Activated T-helper 2 cell treated with anti-CD3 and anti-CD28 coated beads, Interferon-gamma antibody, Interleukin-2, Interleukin-4, amounts not matched to agents 10 μg/mL and 5 μg/mL and 100 μg/mL, durations not matched to agents 14 hours and 24 hours and 36 hours (primary cell): ENCODE measurements at regions of chr17 and their contacts with region 1.

Region 1: DNA sequence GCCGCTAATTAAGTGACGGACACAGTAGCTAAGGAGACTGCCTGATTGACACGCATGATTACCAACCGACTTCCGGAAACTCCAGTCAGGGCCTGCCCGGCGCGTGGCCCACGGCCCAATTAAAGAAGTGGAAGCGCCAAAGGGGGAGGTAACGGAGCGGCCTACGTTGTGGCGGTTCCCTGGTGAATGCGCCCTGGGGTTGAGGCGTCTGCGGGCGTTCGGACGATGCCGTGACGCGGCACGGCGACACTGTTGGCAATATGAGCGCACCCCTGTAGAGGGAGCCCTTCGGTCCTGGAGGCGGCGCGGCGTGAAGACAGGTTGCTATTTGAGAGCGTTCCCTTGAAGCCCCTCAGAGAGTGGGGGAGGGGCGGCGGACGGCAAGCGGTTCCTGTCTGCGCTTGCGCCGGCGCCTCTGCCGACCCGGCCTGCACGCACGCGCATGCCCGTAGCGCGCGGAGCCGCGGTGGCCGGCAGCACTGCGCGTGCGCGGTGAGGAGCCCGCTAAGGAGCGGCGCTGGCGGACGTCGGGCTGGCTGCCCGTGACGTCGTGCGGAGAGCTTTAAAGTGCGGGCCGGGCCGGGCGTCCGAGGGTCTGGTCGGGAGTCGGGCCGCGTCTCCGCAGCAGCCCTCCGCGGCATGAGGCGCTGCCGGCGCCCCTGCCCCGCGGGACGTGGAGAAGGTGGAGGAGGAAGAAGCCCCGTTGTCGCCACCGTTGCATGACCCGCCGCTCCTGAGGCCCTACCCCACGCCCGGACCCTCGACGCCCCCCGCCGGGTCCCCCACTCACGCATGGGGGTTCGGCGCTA is at the start of gene ALKBH5:
- DNase-seq: peak; percentile 96
- H3K4me3 Mint-ChIP-seq: peak within 1 kb of the TSS; percentile 97
- H3K27ac Mint-ChIP-seq: peak within 1 kb of the TSS; percentile 98
- H3K4me1 Mint-ChIP-seq: peaks cover 56% of the 10 kb centered on the region
- H3K27me3 Mint-ChIP-seq: no peaks in the 10 kb centered on the region
- total RNA-seq, gene ALKBH5: 164 and 165 TPM in 2 replicates

Region 2: GRCh38 chr17:17591355-17592298 is 591.9 kb before region 1 on chr17 and contains the start of gene PEMT:
- intact Hi-C with region 1: loop called (anchors 5 kb)
- DNase-seq: peak; percentile 92
- H3K4me3 Mint-ChIP-seq: peak within 1 kb of the TSS; percentile 96
- H3K27ac Mint-ChIP-seq: peak within 1 kb of the TSS; percentile 96
- H3K4me1 Mint-ChIP-seq: peaks cover 12% of the 10 kb centered on the region
- H3K27me3 Mint-ChIP-seq: no peaks in the 10 kb centered on the region
- total RNA-seq, gene PEMT: 37.4 and 39.2 TPM in 2 replicates

Region 3: GRCh38 chr17:17972126-17972951 is 211.2 kb before region 1 on chr17 and contains the starts of genes DRC3 and TOM1L2:
- intact Hi-C with region 1: loop called (anchors 2 kb)
- DNase-seq: peak; percentile 100
- H3K4me3 Mint-ChIP-seq: peak within 1 kb of the TSS; percentile 91
- H3K27ac Mint-ChIP-seq: peak within 1 kb of the TSS; percentile 80
- H3K4me1 Mint-ChIP-seq: peaks cover 27% of the 10 kb centered on the region
- H3K27me3 Mint-ChIP-seq: no peaks in the 10 kb centered on the region
- total RNA-seq, gene DRC3: not detected in 2 replicates
- total RNA-seq, gene TOM1L2: 9.4 and 13.4 TPM in 2 replicates

Region 4: GRCh38 chr17:18087610-18088491 is 95.7 kb before region 1 on chr17 and contains the start of gene DRG2:
- intact Hi-C with region 1: loop called (anchors 5 kb)
- DNase-seq: peak; percentile 85
- H3K4me3 Mint-ChIP-seq: peak within 1 kb of the TSS; percentile 100
- H3K27ac Mint-ChIP-seq: peak within 1 kb of the TSS; percentile 97
- H3K4me1 Mint-ChIP-seq: peaks cover 17% of the 10 kb centered on the region
- H3K27me3 Mint-ChIP-seq: no peaks in the 10 kb centered on the region
- total RNA-seq, gene DRG2: 57.9 and 62.2 TPM in 2 replicates

Region 5: DNA sequence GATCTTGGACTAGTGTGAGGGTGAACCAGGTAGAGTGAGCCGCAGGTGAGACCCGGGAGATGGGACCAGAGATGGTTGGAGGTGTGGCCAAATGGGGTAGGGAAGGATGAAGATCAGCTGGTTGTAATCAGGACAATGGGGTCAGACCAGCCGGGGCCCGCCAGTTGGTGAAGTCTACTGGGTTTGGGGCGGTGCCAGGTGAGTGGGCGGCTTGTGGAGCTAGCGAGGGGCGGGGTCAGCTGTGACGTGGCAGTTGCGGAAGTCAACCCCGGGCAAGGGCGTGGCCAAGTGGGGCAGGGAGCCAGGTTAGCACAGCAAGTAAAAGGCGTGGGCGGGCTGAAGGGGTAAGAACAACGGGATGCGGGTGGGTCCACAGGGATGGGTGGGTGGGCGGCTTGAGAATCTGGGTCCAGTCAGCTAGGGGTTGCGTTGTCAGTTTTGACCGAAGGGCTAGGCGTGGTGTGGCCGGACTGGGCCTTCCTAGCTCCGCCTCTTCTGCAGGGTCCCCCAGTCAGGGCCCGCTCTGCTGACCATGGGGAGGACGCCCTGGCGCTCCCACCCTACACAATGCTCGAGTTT is 25.4 kb before region 1 on chr17:
- intact Hi-C with region 1: loop called (anchors 2 kb)
- DNase-seq: peak; percentile 89
- H3K4me3 Mint-ChIP-seq: peak overlapping the region; percentile 76
- H3K27ac Mint-ChIP-seq: peak overlapping the region; percentile 87
- H3K4me1 Mint-ChIP-seq: peaks cover 12% of the 10 kb centered on the region
- H3K27me3 Mint-ChIP-seq: no peaks in the 10 kb centered on the region

Region 6: GRCh38 chr17:18217412-18218015 is 34.0 kb after region 1 on chr17:
- intact Hi-C with region 1: no loop called
- DNase-seq: peak; percentile 65
- H3K4me3 Mint-ChIP-seq: no peak overlapping the region
- H3K27ac Mint-ChIP-seq: no peak overlapping the region
- H3K4me1 Mint-ChIP-seq: no peaks in the 10 kb centered on the region
- H3K27me3 Mint-ChIP-seq: no peaks in the 10 kb centered on the region

Region 7: GRCh38 chr17:18260332-18261144 is 77.0 kb after region 1 on chr17 and contains the start of gene MIEF2:
- intact Hi-C with region 1: loop called (anchors 2 kb)
- DNase-seq: peak; percentile 89
- H3K4me3 Mint-ChIP-seq: peak within 1 kb of the TSS; percentile 82
- H3K27ac Mint-ChIP-seq: peak within 1 kb of the TSS; percentile 82
- H3K4me1 Mint-ChIP-seq: peaks cover 25% of the 10 kb centered on the region
- H3K27me3 Mint-ChIP-seq: no peaks in the 10 kb centered on the region
- total RNA-seq, gene MIEF2: 6.8 and 7.9 TPM in 2 replicates

Region 8: GRCh38 chr17:19377602-19378392 is 1194.3 kb after region 1 on chr17:
- intact Hi-C with region 1: loop called (anchors 5 kb)
- DNase-seq: peak; percentile 98
- H3K4me3 Mint-ChIP-seq: peak overlapping the region; percentile 98
- H3K27ac Mint-ChIP-seq: peak overlapping the region; percentile 97
- H3K4me1 Mint-ChIP-seq: peaks cover 21% of the 10 kb centered on the region
- H3K27me3 Mint-ChIP-seq: no peaks in the 10 kb centered on the region